GM12878 (cell line): ENCODE measurements at regions of chr5 and their contacts with region 1.

Region 1: GRCh38 chr5:90434116-90434714 is 24.7 kb upstream of the CETN3 start:
- DNase-seq: no peak
- ATAC-seq: peak; percentile 92
- H3K4me3 ChIP-seq: no peak overlapping the region
- H3K27ac ChIP-seq: no peak overlapping the region
- H3K4me1 ChIP-seq: 0 out of 2 replicates have a peak, but pooled peaks cover 5% of the 10 kb centered on the region
- H3K27me3 ChIP-seq: no peaks in the 10 kb centered on the region
- CTCF ChIP-seq: peak; percentile 65 to 75 (median 68)
- EP300 ChIP-seq: no peak
- POLR2A ChIP-seq: no peak
- RAD21 ChIP-seq: peak; percentile 72

Region 2: DNA sequence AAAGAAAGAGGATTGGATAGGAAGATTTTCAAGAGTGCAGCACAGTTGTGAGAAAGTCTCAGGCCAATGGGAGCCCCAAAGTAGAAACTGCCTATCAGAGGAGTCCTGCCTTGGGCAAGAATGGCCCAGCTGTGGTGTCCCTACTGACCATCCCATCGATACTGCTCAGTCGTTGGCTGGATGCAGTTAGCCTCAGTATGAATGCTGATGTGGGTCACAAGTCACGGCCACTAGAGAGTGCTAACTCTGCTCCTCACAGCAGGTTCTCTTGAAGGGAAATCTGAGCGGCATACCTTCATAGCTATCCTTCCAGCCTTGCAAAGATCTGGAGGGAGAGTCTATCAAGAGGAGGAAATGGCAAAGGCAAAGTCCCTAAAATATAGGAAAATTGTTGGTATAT is 13.1 kb before region 1 on chr5:
- CTCF ChIA-PET with region 1: interaction called, 17 read pairs
- POLR2A ChIA-PET with region 1: no interaction called
- RAD21 ChIA-PET with region 1: interaction called, 3 read pairs
- SMC1A ChIA-PET with region 1: interaction called, 30 read pairs
- in situ Hi-C with region 1: no loop called
- intact Hi-C with region 1: no loop called
- DNase-seq: no peak
- ATAC-seq: peak; percentile 88
- H3K4me3 ChIP-seq: no peak overlapping the region
- H3K27ac ChIP-seq: no peak overlapping the region
- H3K4me1 ChIP-seq: no peaks in the 10 kb centered on the region
- H3K27me3 ChIP-seq: no peaks in the 10 kb centered on the region
- CTCF ChIP-seq: peak; percentile 23 to 43 (median 24); a peak in 3 of 6 replicates
- EP300 ChIP-seq: no peak
- POLR2A ChIP-seq: no peak
- RAD21 ChIP-seq: no peak

Region 3: DNA sequence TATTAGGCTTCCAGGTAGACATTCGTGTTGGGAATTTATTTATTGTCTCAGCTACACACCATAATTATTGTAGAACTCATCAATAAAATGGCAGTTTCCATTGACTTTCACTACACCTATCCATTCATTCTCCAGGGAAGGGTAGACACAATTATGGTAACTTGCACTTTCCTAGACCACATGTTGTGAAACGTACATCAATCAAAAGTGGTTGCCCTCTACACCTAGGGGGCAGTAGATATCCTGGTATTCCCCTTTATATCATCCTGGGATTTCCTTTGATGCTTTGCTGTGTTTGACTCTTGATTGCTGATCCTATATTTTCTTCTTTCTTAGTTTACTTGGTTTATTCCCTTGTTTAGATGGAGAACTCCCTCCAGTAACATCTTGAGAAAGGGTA is 172.3 kb after region 1 on chr5:
- CTCF ChIA-PET with region 1: interaction called, 40 read pairs
- POLR2A ChIA-PET with region 1: no interaction called
- RAD21 ChIA-PET with region 1: interaction called, 5 read pairs
- SMC1A ChIA-PET with region 1: interaction called, 30 read pairs
- in situ Hi-C with region 1: no loop called
- intact Hi-C with region 1: loop called (anchors 2 kb)
- DNase-seq: no peak
- ATAC-seq: peak; percentile 48; the same call in 2 of the 3 replicates
- H3K4me3 ChIP-seq: no peak overlapping the region
- H3K27ac ChIP-seq: no peak overlapping the region
- H3K4me1 ChIP-seq: peaks cover 3% of the 10 kb centered on the region; the same call in 1 of the 2 replicates
- H3K27me3 ChIP-seq: no peaks in the 10 kb centered on the region; a peak in 1 of 4 replicates
- CTCF ChIP-seq: peak; percentile 31 to 41 (median 41); a peak in 4 of 6 replicates
- EP300 ChIP-seq: no peak
- POLR2A ChIP-seq: no peak
- RAD21 ChIP-seq: peak; percentile 44